CD8-positive, alpha-beta T cell (primary cell): ENCODE measurements at regions of chr18 and their contacts with region 1.

Region 1: DNA sequence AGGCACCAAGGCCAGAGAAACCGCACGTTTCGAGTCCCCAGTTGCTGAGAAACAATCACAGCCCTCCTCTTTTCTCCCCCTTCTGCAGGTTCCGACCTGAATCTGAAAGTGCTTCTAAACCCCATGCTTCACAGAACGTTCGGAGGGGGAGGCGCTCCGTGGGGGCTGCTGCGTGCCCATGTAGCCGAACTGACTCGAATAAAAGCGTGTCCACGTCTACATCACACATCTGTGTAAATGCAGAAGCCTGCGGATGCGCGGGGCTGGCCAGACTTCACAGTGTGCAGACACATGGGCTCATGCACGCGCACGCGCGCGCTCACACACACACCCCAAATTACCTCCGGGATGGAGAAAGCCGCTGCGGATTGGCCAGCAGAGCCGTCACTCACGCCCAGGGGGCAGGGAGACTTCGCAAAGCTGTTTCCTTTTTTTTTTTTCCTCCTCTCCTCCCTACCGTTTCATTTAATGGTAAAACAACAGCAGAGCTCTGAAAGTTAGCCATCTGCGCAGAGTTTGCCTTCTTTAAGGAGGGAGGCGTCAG is 2.3 kb downstream of the ZNF516 start:
- DNase-seq: peak; percentile 93 to 100 (median 97)
- ATAC-seq: peak; percentile 69
- H3K4me3 ChIP-seq: peak overlapping the region; percentile 66 to 99
- H3K4me3 Mint-ChIP-seq: peak overlapping the region; percentile 92
- H3K27ac ChIP-seq: peak overlapping the region; percentile 46 to 66
- H3K27ac Mint-ChIP-seq: peak overlapping the region; percentile 87
- H3K4me1 ChIP-seq: peaks cover 19% of the 10 kb centered on the region
- H3K4me1 Mint-ChIP-seq: peaks cover 37% of the 10 kb centered on the region
- H3K27me3 ChIP-seq: peaks cover 0 to 9% of the 10 kb centered on the region in 2 experiments
- H3K27me3 Mint-ChIP-seq: peaks cover 28% of the 10 kb centered on the region
- CTCF ChIP-seq: no peak

Region 2: GRCh38 chr18:76450452-76451395 is 42.0 kb before region 1 on chr18:
- CTCF ChIA-PET with region 1: no interaction called
- POLR2A ChIA-PET with region 1: no interaction called
- intact Hi-C with region 1: loop called in 1 of 2 experiments (anchors 2 kb)
- DNase-seq: peak in 2 of 9 experiments; percentile 26 to 49
- ATAC-seq: peak; percentile 40
- H3K4me3 ChIP-seq: peak overlapping the region; percentile 51 to 52
- H3K4me3 Mint-ChIP-seq: peak overlapping the region; percentile 90
- H3K27ac ChIP-seq: no peak overlapping the region
- H3K27ac Mint-ChIP-seq: no peak overlapping the region
- H3K4me1 ChIP-seq: peaks cover 25% of the 10 kb centered on the region
- H3K4me1 Mint-ChIP-seq: peaks cover 42% of the 10 kb centered on the region
- H3K27me3 ChIP-seq: no peaks in the 10 kb centered on the region
- H3K27me3 Mint-ChIP-seq: peaks cover 5% of the 10 kb centered on the region
- CTCF ChIP-seq: no peak

Region 3: GRCh38 chr18:76476665-76477561 is 15.8 kb before region 1 on chr18:
- CTCF ChIA-PET with region 1: no interaction called
- POLR2A ChIA-PET with region 1: no interaction called
- intact Hi-C with region 1: no loop called
- DNase-seq: no peak
- ATAC-seq: no peak
- H3K4me3 ChIP-seq: no peak overlapping the region
- H3K4me3 Mint-ChIP-seq: peak overlapping the region; percentile 3
- H3K27ac ChIP-seq: no peak overlapping the region
- H3K27ac Mint-ChIP-seq: no peak overlapping the region
- H3K4me1 ChIP-seq: no peaks in the 10 kb centered on the region
- H3K4me1 Mint-ChIP-seq: peaks cover 28% of the 10 kb centered on the region
- H3K27me3 ChIP-seq: no peaks in the 10 kb centered on the region
- H3K27me3 Mint-ChIP-seq: peaks cover 6% of the 10 kb centered on the region
- CTCF ChIP-seq: no peak

Region 4: GRCh38 chr18:76721207-76721996 is 228.7 kb after region 1 on chr18:
- CTCF ChIA-PET with region 1: no interaction called
- POLR2A ChIA-PET with region 1: interaction called, 5 read pairs
- intact Hi-C with region 1: loop called in 1 of 2 experiments (anchors 5 kb)
- DNase-seq: peak; percentile 38 to 87 (median 71)
- ATAC-seq: peak; percentile 95
- H3K4me3 ChIP-seq: peak overlapping the region in 1 of 2 experiments; percentile 32
- H3K4me3 Mint-ChIP-seq: peak overlapping the region; percentile 68
- H3K27ac ChIP-seq: peak overlapping the region in 1 of 2 experiments; percentile 5
- H3K27ac Mint-ChIP-seq: peak overlapping the region; percentile 80
- H3K4me1 ChIP-seq: peaks cover 50% of the 10 kb centered on the region
- H3K4me1 Mint-ChIP-seq: peaks cover 45% of the 10 kb centered on the region
- H3K27me3 ChIP-seq: no peaks in the 10 kb centered on the region
- H3K27me3 Mint-ChIP-seq: peaks cover 12% of the 10 kb centered on the region
- CTCF ChIP-seq: no peak

Region 5: DNA sequence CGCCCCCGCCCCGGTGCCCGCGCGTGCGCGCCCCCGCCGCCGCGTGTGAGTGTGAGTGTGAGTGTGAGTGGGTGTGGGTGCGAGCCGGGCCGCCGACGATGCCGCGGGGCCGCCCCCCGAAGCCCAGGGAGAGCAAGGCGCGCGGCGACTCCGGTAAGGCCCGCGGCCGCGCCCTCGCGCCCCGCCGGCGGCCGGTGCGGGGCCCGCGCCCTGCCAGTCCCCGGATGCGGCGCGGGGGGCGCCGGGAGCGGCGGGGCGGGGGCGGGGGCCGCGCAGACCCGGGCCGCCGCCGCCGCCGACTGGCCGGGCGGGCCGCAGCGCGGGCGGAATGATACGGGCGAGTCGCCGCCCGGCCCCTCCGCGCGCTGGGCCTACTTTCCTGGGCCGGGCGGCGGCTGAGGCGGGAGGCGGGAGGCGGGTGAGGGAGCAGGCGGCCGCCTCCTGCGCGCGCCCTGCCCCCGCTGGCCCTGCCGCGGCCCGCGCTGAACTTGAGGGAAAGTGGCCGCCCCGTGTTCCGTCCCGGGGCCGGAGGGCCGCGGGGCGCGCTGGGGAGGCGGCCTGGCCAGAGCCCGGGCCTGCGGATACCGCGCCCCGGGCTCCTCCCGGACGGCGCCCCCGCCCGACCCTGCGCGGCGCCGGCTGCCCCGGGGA is 329.9 kb after region 1 on chr18 and contains the start of gene ZNF236:
- CTCF ChIA-PET with region 1: no interaction called
- POLR2A ChIA-PET with region 1: no interaction called
- intact Hi-C with region 1: loop called in 1 of 2 experiments (anchors 5 kb)
- DNase-seq: peak; percentile 43 to 86 (median 68)
- ATAC-seq: peak; percentile 50
- H3K4me3 ChIP-seq: peak within 1 kb of the TSS; percentile 75 to 97
- H3K4me3 Mint-ChIP-seq: peak within 1 kb of the TSS; percentile 93
- H3K27ac ChIP-seq: peak within 1 kb of the TSS; percentile 67 to 91
- H3K27ac Mint-ChIP-seq: peak within 1 kb of the TSS; percentile 96
- H3K4me1 ChIP-seq: peaks cover 28% of the 10 kb centered on the region
- H3K4me1 Mint-ChIP-seq: peaks cover 50% of the 10 kb centered on the region
- H3K27me3 ChIP-seq: no peaks in the 10 kb centered on the region
- H3K27me3 Mint-ChIP-seq: no peaks in the 10 kb centered on the region
- CTCF ChIP-seq: no peak
- total RNA-seq, gene ZNF236: 24.9 to 25.4 TPM

Region 6: GRCh38 chr18:76847916-76848315 is 355.2 kb after region 1 on chr18:
- CTCF ChIA-PET with region 1: no interaction called
- POLR2A ChIA-PET with region 1: no interaction called
- intact Hi-C with region 1: no loop called
- DNase-seq: no peak
- ATAC-seq: no peak
- H3K4me3 ChIP-seq: no peak overlapping the region
- H3K4me3 Mint-ChIP-seq: no peak overlapping the region
- H3K27ac ChIP-seq: no peak overlapping the region
- H3K27ac Mint-ChIP-seq: no peak overlapping the region
- H3K4me1 ChIP-seq: no peaks in the 10 kb centered on the region
- H3K4me1 Mint-ChIP-seq: peaks cover 32% of the 10 kb centered on the region
- H3K27me3 ChIP-seq: no peaks in the 10 kb centered on the region
- H3K27me3 Mint-ChIP-seq: no peaks in the 10 kb centered on the region
- CTCF ChIP-seq: no peak

Region 7: DNA sequence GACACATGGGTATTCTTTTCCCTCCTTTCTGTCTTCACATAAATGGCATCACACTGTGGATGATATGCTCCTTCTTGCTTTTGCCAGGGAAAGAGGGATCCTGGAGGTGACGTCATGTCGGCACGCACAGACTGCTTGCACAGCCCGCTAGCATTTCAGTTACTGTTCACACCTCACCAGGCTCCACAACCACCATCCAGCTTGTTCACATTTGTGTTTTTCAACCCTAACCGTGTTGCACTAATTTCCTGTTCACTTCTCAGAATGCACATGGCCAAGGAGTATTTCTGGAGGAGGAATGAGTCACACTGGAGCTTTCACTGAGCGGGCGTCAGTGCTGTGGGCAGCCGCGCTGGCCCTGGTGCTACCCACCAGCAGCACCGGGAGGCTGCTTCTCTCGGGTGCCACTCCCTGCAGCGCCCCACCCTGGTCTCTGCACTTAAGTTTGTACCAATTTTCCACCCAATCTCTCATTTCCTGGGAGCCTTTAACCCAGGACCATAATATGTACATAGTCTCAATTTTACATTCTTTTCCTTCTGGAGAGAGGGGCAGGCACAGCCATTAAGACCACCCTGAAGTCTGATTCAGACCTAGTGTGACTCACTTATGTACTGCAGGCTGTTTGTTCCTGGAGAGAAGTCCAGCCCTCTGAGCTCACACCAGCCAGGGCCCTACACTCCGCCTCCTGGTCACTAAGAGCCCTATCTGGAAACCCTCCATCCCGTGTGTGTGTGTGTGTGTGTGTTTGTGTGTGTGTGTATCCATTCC is 574.7 kb after region 1 on chr18:
- CTCF ChIA-PET with region 1: no interaction called
- POLR2A ChIA-PET with region 1: no interaction called
- intact Hi-C with region 1: loop called in 1 of 2 experiments (anchors 10 kb)
- DNase-seq: peak in 8 of 9 experiments; percentile 48 to 90 (median 74)
- ATAC-seq: peak; percentile 20
- H3K4me3 ChIP-seq: peak overlapping the region in 1 of 2 experiments; percentile 9
- H3K4me3 Mint-ChIP-seq: peak overlapping the region; percentile 66
- H3K27ac ChIP-seq: peak overlapping the region; percentile 58 to 87
- H3K27ac Mint-ChIP-seq: peak overlapping the region; percentile 97
- H3K4me1 ChIP-seq: peaks cover 99% of the 10 kb centered on the region
- H3K4me1 Mint-ChIP-seq: peaks cover 94% of the 10 kb centered on the region
- H3K27me3 ChIP-seq: no peaks in the 10 kb centered on the region
- H3K27me3 Mint-ChIP-seq: no peaks in the 10 kb centered on the region
- CTCF ChIP-seq: no peak